ENCODE measurements at regions of chr16 and their contacts with region 1.

Region 1: GRCh38 chr16:63169100-63169499 is 1132.9 kb upstream of the CDH8 start:
- DNase-seq: no peak
- ATAC-seq: no peak
- H3K4me3 ChIP-seq: no peak overlapping the region
- H3K27ac ChIP-seq: no peak overlapping the region
- H3K4me1 ChIP-seq: no peaks in the 10 kb centered on the region
- H3K27me3 ChIP-seq: no peaks in the 10 kb centered on the region
- CTCF ChIP-seq: no peak
- EP300 ChIP-seq: no peak
- POLR2A ChIP-seq: no peak
- RAD21 ChIP-seq: no peak

Region 2: GRCh38 chr16:61228371-61228770 is 1940.7 kb before region 1 on chr16:
- CTCF ChIA-PET with region 1: no interaction called
- POLR2A ChIA-PET with region 1: no interaction called
- RAD21 ChIA-PET with region 1: no interaction called
- SMC1A ChIA-PET with region 1: no interaction called
- in situ Hi-C with region 1: no loop called
- intact Hi-C with region 1: loop called (anchors 10 kb)
- DNase-seq: no peak
- ATAC-seq: no peak
- H3K4me3 ChIP-seq: no peak overlapping the region
- H3K27ac ChIP-seq: no peak overlapping the region
- H3K4me1 ChIP-seq: no peaks in the 10 kb centered on the region
- H3K27me3 ChIP-seq: no peaks in the 10 kb centered on the region
- CTCF ChIP-seq: no peak
- EP300 ChIP-seq: no peak
- POLR2A ChIP-seq: no peak
- RAD21 ChIP-seq: no peak

Measured in GM12878 (cell line).